A549 (cell line): ENCODE measurements at regions of chr9 and their contacts with region 1.

Region 1: GRCh38 chr9:137029058-137029936 is 1.3 kb upstream of the ABCA2 start:
- DNase-seq: peak; percentile 67 to 73
- ATAC-seq: peak; percentile 63 to 90
- H3K4me3 ChIP-seq: peak overlapping the region; percentile 74; the same call in 1 of the 3 replicates
- H3K27ac ChIP-seq: peak overlapping the region in 1 of 2 experiments; percentile 92; a peak in 4 of 6 replicates
- H3K4me1 ChIP-seq: peaks cover 26% of the 10 kb centered on the region
- CTCF ChIP-seq: peak; percentile 67
- EP300 ChIP-seq: no peak
- POLR2A ChIP-seq: no peak
- RAD21 ChIP-seq: peak in 1 of 2 experiments; percentile 49; a peak in 2 of 5 replicates

Region 2: GRCh38 chr9:136849038-136849959 is 180.0 kb before region 1 on chr9 and contains the start of gene PHPT1:
- CTCF ChIA-PET with region 1: interaction called, 13 read pairs
- POLR2A ChIA-PET with region 1: no interaction called
- DNase-seq: peak; percentile 99 to 100
- ATAC-seq: peak; percentile 53 to 80
- H3K4me3 ChIP-seq: peak within 1 kb of the TSS; percentile 87
- H3K27ac ChIP-seq: peak within 1 kb of the TSS; percentile 96 to 97
- H3K4me1 ChIP-seq: peaks cover 22% of the 10 kb centered on the region
- CTCF ChIP-seq: no peak
- EP300 ChIP-seq: no peak
- POLR2A ChIP-seq: peak; percentile 72
- RAD21 ChIP-seq: 0 out of 5 replicates have a peak, but pooled peaks of 1 of the 2 experiments have one; percentile 17
- polyA plus RNA-seq, gene PHPT1: 104 and 123 TPM in 2 replicates

Region 3: GRCh38 chr9:136985853-136986252 is 43.4 kb before region 1 on chr9:
- CTCF ChIA-PET with region 1: interaction called, 29 read pairs
- POLR2A ChIA-PET with region 1: no interaction called
- DNase-seq: no peak
- ATAC-seq: no peak
- H3K4me3 ChIP-seq: no peak overlapping the region
- H3K27ac ChIP-seq: no peak overlapping the region
- H3K4me1 ChIP-seq: peaks cover 10% of the 10 kb centered on the region; the same call in 1 of the 3 replicates
- CTCF ChIP-seq: no peak
- EP300 ChIP-seq: no peak
- POLR2A ChIP-seq: no peak
- RAD21 ChIP-seq: no peak

Region 4: DNA sequence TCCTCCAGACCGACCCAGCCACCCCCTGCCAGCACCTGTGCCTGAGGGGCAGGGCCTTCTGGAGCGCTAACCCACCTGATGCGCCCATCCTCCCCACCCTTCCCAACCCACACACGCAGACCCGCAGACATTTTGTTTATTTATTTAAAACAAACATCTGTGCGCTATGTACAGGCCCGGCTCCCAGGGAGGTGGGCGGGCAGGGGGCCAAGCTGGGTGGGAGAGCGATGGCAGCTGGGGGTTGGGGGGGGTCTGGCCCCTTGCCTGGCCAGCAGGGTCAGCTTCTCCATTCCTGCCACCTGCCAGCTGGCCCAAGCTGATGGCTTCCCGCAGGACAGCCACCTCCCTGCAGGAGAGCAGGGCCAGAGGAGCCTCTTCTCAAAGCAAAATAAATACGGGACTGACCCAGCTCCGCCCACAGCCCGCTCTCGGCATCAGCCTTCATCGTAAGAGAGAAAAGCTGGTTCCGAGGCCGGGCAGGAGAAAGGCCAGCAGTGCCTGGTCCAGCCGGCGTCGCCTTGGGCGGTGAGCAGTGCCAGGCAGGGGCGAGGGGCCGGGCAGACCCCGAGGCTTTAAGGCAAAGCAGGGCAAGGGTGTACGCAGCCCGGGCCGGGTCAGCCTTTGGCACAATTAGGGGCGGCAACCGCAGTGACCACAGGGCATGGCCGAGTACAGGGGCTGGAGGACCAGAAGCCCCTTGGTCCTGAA is 22.0 kb before region 1 on chr9:
- CTCF ChIA-PET with region 1: interaction called, 37 read pairs
- POLR2A ChIA-PET with region 1: no interaction called
- DNase-seq: no peak
- ATAC-seq: peak in 1 of 2 experiments; percentile 47; a peak in 3 of 6 replicates
- H3K4me3 ChIP-seq: no peak overlapping the region
- H3K27ac ChIP-seq: no peak overlapping the region
- H3K4me1 ChIP-seq: peaks cover 5% of the 10 kb centered on the region; the same call in 2 of the 3 replicates
- CTCF ChIP-seq: no peak
- EP300 ChIP-seq: no peak
- POLR2A ChIP-seq: no peak
- RAD21 ChIP-seq: no peak

Region 5: DNA sequence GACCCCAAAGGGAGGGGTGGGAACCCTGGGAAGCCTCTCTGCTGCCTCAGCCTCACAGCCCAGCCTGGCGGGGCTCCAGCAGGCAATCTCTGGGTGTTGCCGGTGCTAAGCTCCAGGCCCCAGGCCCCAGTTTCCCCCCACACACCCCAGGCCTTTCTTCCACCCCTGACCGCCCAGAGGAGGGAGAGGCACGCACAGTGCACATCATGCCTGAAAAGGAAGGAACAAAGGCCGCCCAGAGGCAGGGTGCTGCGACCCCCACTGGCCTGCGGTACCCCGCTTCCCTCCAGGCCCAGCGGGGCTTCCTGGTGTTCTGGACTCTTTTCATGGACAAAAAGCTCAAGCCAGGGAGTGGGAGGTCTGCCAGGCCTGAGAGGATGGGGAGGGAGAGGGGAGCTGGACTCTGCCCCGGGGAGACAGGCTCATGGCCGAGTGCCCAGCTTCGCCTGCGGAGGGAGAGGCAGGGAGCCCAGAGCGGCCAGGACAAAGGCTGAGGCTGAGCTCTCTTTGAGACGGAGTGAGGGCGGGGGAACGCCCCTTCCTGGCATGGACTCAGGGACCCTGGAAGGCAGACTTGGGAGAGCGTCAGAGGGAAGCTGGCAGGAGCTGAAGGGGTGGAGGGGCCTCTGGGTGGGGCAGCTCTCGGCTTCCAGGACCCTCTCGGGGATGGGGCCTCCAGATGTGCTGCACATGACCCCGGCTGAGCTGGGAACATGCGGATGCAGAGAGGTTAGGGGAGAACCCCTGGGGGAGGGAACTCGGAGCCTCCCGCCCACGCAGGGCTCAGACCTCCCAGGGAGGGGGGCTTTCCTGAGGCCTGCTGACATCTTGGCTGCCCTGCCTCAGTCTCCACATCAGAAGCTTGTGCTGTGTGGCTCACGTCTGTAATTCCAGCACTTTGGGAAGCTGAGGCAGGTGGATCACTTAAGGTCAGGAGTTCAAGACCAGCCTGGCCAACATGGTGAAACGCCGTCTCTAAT is 26.4 kb after region 1 on chr9:
- CTCF ChIA-PET with region 1: interaction called, 40 read pairs
- POLR2A ChIA-PET with region 1: no interaction called
- DNase-seq: peak; percentile 58 to 76
- ATAC-seq: peak; percentile 54 to 82
- H3K4me3 ChIP-seq: no peak overlapping the region
- H3K27ac ChIP-seq: peak overlapping the region; percentile 79 to 88
- H3K4me1 ChIP-seq: peaks cover 56% of the 10 kb centered on the region
- CTCF ChIP-seq: no peak
- EP300 ChIP-seq: no peak
- POLR2A ChIP-seq: no peak
- RAD21 ChIP-seq: no peak

Region 6: DNA sequence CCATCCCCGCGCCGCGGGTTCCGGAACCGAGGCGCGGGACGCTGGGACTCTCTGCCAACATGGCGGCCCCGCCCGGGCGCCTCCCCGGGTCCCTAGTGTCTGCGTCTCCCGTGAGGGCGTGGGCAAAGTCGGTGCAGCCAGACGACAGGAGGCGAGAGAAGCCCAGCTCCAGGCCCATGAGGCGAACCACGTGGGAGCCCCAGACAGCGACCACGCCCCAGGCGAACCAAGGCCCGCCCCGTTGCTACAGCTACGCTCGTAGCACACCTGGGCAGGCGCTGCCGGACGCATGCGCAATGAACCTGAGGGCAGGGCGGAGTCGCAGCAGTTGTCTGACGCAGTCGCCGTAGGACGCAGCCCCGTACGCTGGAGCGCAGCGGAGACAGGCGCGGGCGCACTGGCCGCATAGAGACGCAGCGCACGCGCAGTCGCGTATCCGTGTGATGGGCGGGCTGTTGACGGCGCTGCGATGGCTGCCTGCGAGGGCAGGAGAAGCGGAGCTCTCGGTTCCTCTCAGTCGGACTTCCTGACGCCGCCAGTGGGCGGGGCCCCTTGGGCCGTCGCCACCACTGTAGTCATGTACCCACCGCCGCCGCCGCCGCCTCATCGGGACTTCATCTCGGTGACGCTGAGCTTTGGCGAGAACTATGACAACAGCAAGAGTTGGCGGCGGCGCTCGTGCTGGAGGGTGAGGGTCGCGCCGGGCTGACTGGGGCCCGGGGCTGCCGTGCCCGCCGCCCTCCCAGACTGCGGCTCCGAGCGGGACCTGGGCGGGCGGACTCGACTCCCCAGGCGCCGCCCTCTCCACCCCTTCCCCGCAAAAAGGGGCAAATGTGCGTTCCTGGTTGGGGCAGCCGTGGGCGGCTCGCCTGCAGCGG is 57.5 kb after region 1 on chr9 and contains the start of gene MAN1B1:
- CTCF ChIA-PET with region 1: interaction called, 11 read pairs
- POLR2A ChIA-PET with region 1: interaction called, 3 read pairs
- DNase-seq: peak; percentile 94 to 100
- ATAC-seq: peak; percentile 79 to 89
- H3K4me3 ChIP-seq: peak within 1 kb of the TSS; percentile 88
- H3K27ac ChIP-seq: peak within 1 kb of the TSS; percentile 95 to 100
- H3K4me1 ChIP-seq: peaks cover 41% of the 10 kb centered on the region
- CTCF ChIP-seq: no peak
- EP300 ChIP-seq: no peak
- POLR2A ChIP-seq: peak; percentile 89
- RAD21 ChIP-seq: no peak
- polyA plus RNA-seq, gene MAN1B1: 31.7 and 47.8 TPM in 2 replicates